Calu3 (cell line): ENCODE measurements at regions of chr22 and their contacts with region 1.

Region 1: DNA sequence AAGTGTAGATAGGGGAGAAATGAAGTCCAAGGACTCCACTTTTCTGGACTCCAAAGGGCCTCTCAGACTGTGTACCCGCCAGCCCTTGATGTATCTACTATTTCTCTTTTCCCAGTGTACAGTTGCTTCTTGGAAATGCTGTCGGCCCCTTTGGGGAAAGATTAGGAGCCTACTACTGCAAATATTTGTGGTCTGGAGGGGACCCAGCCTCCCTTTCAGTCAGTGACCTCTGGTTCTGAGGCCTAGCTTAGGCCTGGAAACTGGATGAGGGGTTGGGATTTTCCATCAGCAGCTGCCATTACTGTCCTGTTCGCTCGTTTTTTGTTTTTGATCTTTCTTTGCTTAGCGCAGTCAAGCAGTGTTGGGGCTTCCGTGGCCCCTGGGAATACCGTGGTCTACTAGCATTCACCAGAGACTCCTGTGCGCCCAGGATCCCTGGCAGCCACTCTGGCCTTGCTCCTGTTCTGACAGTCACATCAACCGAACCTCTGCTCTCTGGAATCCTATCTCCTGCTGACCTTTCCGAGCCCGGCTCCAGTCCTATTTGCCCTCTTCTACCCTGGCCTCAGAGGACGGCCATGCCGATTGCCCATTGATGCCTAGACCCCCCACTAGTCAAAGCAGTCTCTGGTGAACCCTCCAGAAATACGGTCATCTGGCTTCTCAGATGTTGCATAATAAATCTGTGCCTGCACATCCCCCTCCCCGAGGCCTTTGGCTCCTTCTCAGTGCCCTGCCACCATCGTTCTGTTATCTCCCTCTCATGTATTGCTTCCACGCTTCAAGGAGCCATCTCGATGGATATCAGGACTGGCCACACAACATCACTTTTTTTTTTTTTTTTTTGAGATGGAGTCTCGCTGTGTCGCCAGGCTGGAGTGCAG is 1.3 kb upstream of the RRP7A start:
- DNase-seq: no peak
- H3K4me3 Mint-ChIP-seq: no peak overlapping the region
- H3K27ac Mint-ChIP-seq: no peak overlapping the region
- H3K4me1 Mint-ChIP-seq: peaks cover 11% of the 10 kb centered on the region
- H3K27me3 Mint-ChIP-seq: no peaks in the 10 kb centered on the region
- CTCF ChIP-seq: no peak

Region 2: GRCh38 chr22:42500836-42501179 is 20.1 kb before region 1 on chr22:
- CTCF ChIA-PET with region 1: no interaction called
- intact Hi-C with region 1: no loop called
- DNase-seq: no peak
- H3K4me3 Mint-ChIP-seq: no peak overlapping the region
- H3K27ac Mint-ChIP-seq: no peak overlapping the region
- H3K4me1 Mint-ChIP-seq: peaks cover 27% of the 10 kb centered on the region
- H3K27me3 Mint-ChIP-seq: no peaks in the 10 kb centered on the region
- CTCF ChIP-seq: no peak

Region 3: GRCh38 chr22:42533638-42533977 is 12.7 kb after region 1 on chr22:
- CTCF ChIA-PET with region 1: interaction called, 10 read pairs
- intact Hi-C with region 1: no loop called
- DNase-seq: no peak
- H3K4me3 Mint-ChIP-seq: peak overlapping the region; percentile 68
- H3K27ac Mint-ChIP-seq: peak overlapping the region; percentile 81
- H3K4me1 Mint-ChIP-seq: peaks cover 28% of the 10 kb centered on the region
- H3K27me3 Mint-ChIP-seq: no peaks in the 10 kb centered on the region
- CTCF ChIP-seq: no peak

Region 4: GRCh38 chr22:42596336-42596735 is 75.4 kb after region 1 on chr22:
- CTCF ChIA-PET with region 1: no interaction called
- intact Hi-C with region 1: no loop called
- DNase-seq: no peak
- H3K4me3 Mint-ChIP-seq: no peak overlapping the region
- H3K27ac Mint-ChIP-seq: no peak overlapping the region
- H3K4me1 Mint-ChIP-seq: no peaks in the 10 kb centered on the region
- H3K27me3 Mint-ChIP-seq: no peaks in the 10 kb centered on the region
- CTCF ChIP-seq: no peak